ENCODE measurements at regions of chr15 and their contacts with region 1.

Region 1: GRCh38 chr15:46502668-46503067 is 867.8 kb downstream of the SQOR start:
- DNase-seq: no peak
- ATAC-seq: no peak
- H3K4me3 ChIP-seq: no peak overlapping the region
- H3K27ac ChIP-seq: no peak overlapping the region
- H3K4me1 ChIP-seq: no peaks in the 10 kb centered on the region
- H3K27me3 ChIP-seq: no peaks in the 10 kb centered on the region

Region 2: DNA sequence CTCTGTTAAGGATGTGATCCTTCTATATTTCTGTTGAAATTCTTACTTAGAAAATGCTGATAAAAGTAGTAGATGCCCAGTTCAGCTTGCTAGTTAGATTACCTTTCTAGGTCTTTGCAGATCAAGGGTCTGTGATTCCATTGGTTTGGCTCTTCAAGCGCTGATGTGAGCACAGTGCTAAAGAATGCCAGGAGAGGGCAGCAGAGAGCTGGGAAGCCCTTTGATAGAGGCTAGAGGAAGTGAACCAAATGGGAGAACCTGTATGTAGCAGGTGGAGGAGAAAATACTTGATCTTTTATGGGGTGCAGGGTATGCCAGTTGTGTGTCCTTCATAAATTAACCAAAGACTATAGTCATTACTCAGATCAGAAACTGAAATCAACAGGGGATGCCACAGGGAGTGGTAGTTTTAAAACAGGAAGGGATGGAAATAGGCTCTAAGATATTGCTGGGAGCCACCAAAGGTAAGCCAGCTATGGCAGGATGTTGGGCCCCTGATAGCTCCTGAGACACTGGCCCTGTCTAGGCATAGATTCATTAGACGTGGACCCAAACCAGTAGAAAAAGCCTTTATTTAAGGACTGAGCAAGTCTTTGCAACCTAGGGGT is 190.4 kb before region 1 on chr15:
- intact Hi-C with region 1: loop called in 1 of 2 experiments (anchors 5 kb)
- DNase-seq: peak; percentile 67 to 82
- ATAC-seq: peak; percentile 83
- H3K4me3 ChIP-seq: no peak overlapping the region
- H3K27ac ChIP-seq: no peak overlapping the region
- H3K4me1 ChIP-seq: no peaks in the 10 kb centered on the region
- H3K27me3 ChIP-seq: no peaks in the 10 kb centered on the region

Region 3: DNA sequence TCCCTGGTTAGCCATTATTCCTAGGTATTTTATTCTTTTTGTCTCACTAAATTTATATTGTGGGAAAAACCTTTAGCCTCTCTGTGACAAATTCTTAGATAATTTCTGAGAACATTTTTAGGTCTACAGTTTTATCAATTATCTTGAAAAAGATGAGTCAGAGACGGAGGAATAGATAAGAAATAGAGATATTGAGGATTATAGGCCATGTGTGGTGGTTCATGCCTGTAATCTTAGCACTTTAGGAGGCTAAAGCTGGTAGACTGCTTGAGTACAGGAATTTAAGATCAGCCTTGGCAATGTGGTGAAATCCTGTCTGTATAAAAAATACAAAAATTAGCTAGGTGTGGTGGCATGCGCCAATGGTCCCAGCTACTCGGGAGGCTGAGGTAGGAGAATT is 92.3 kb after region 1 on chr15:
- intact Hi-C with region 1: no loop called
- DNase-seq: no peak
- ATAC-seq: no peak
- H3K4me3 ChIP-seq: no peak overlapping the region
- H3K27ac ChIP-seq: no peak overlapping the region
- H3K4me1 ChIP-seq: no peaks in the 10 kb centered on the region
- H3K27me3 ChIP-seq: no peaks in the 10 kb centered on the region

Measured in aorta (tissue), 5 donors.